CD14-positive monocyte (primary cell): ENCODE measurements at regions of chr1 and their contacts with region 1.

Region 1: GRCh38 chr1:109532365-109533136 is 7.1 kb upstream of the GPR61 start:
- DNase-seq: peak; percentile 69 to 80 (median 77)
- H3K4me3 ChIP-seq: peak overlapping the region in 2 of 3 experiments; percentile 13 to 59
- H3K4me3 Mint-ChIP-seq: peak overlapping the region; percentile 61 to 75
- H3K27ac ChIP-seq: no peak overlapping the region
- H3K27ac Mint-ChIP-seq: peak overlapping the region in 3 of 7 donors; percentile 2 to 79 (median 27)
- H3K4me1 ChIP-seq: peaks cover 10 to 11% of the 10 kb centered on the region in 2 donors
- H3K4me1 Mint-ChIP-seq: peaks cover 9% of the 10 kb centered on the region
- H3K27me3 ChIP-seq: no peaks in the 10 kb centered on the region
- H3K27me3 Mint-ChIP-seq: peaks cover 0 to 5% (median 2%) of the 10 kb centered on the region in 3 donors
- CTCF ChIP-seq: peak; percentile 94

Region 2: DNA sequence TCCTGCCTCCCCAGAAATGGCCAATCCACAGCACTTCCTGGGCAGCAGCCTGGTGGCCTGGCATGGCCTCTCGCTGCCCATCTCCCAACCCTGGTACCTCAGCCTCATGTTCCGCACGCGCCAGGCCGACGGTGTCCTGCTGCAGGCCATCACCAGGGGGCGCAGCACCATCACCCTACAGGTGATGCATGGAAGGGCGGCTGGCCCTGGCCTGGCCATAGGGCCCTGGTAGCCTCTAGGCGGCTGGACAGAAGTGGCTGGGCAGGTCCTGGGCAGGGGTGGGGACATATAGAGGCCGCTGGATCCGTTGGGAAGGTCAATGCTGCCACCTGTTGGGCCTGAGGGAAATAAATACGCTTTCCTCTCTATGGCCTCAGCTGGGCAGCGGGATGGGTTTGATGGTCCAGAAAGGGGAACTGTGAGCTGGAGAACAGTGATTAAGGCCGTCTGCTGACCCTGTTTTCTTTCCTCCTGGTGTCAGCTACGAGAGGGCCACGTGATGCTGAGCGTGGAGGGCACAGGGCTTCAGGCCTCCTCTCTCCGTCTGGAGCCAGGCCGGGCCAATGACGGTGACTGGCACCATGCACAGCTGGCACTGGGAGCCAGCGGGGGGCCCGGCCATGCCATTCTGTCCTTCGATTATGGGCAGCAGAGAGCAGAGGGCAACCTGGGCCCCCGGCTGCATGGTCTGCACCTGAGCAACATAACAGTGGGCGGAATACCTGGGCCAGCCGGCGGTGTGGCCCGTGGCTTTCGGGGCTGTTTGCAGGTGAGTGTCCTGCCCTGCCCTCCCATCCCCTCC is 268.8 kb before region 1 on chr1:
- intact Hi-C with region 1: loop called in 1 of 2 experiments (anchors 2 kb)
- DNase-seq: peak; percentile 78 to 85 (median 79)
- H3K4me3 ChIP-seq: no peak overlapping the region
- H3K4me3 Mint-ChIP-seq: no peak overlapping the region
- H3K27ac ChIP-seq: no peak overlapping the region
- H3K27ac Mint-ChIP-seq: peak overlapping the region in 1 of 7 donors; percentile 32
- H3K4me1 ChIP-seq: peaks cover 5 to 7% of the 10 kb centered on the region in 2 donors
- H3K4me1 Mint-ChIP-seq: peaks cover 6% of the 10 kb centered on the region
- H3K27me3 ChIP-seq: no peaks in the 10 kb centered on the region
- H3K27me3 Mint-ChIP-seq: peaks cover 0 to 9% (median 8%) of the 10 kb centered on the region in 3 donors
- CTCF ChIP-seq: peak; percentile 97

Region 3: GRCh38 chr1:109277434-109278204 is 254.9 kb before region 1 on chr1:
- intact Hi-C with region 1: loop called in 1 of 2 experiments (anchors 10 kb)
- DNase-seq: peak; percentile 42 to 62 (median 58)
- H3K4me3 ChIP-seq: no peak overlapping the region
- H3K4me3 Mint-ChIP-seq: no peak overlapping the region
- H3K27ac ChIP-seq: no peak overlapping the region
- H3K27ac Mint-ChIP-seq: peak overlapping the region in 1 of 7 donors; percentile 48
- H3K4me1 ChIP-seq: peaks cover 39 to 52% of the 10 kb centered on the region in 2 donors
- H3K4me1 Mint-ChIP-seq: peaks cover 61% of the 10 kb centered on the region
- H3K27me3 ChIP-seq: no peaks in the 10 kb centered on the region
- H3K27me3 Mint-ChIP-seq: peaks cover 4 to 10% (median 8%) of the 10 kb centered on the region in 3 donors
- CTCF ChIP-seq: peak; percentile 98

Region 4: DNA sequence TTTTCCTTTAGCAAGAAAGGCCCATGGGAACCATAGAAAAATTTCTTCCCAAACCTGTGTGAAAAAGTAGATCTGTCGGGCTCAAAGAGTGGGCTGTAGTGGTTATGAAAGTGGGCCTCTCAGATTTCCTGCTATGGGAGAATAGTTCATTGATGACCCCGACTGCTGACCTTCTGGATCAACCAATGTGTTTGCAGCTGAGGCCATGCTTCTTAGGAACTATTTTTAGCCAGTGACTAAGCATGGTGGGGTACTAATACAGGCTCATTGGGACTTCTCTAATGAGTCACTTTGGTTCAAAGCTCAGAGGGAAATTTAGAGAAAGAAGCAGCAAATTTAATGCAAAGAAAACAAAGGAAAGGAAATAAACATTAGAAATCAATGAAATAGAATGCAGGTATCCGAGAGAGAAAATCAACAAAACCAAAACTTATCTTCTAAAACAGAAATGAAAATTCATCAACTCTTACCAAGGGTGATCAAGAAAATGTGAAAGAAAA is 93.7 kb before region 1 on chr1:
- intact Hi-C with region 1: loop called in 1 of 2 experiments (anchors 10 kb)
- DNase-seq: peak in 2 of 3 donors; percentile 8 to 51
- H3K4me3 ChIP-seq: no peak overlapping the region
- H3K4me3 Mint-ChIP-seq: no peak overlapping the region
- H3K27ac ChIP-seq: no peak overlapping the region
- H3K27ac Mint-ChIP-seq: no peak overlapping the region
- H3K4me1 ChIP-seq: no peaks in the 10 kb centered on the region
- H3K4me1 Mint-ChIP-seq: no peaks in the 10 kb centered on the region
- H3K27me3 ChIP-seq: peaks cover 16 to 23% of the 10 kb centered on the region in 2 donors
- H3K27me3 Mint-ChIP-seq: peaks cover 2 to 9% (median 5%) of the 10 kb centered on the region in 3 donors
- CTCF ChIP-seq: no peak

Region 5: DNA sequence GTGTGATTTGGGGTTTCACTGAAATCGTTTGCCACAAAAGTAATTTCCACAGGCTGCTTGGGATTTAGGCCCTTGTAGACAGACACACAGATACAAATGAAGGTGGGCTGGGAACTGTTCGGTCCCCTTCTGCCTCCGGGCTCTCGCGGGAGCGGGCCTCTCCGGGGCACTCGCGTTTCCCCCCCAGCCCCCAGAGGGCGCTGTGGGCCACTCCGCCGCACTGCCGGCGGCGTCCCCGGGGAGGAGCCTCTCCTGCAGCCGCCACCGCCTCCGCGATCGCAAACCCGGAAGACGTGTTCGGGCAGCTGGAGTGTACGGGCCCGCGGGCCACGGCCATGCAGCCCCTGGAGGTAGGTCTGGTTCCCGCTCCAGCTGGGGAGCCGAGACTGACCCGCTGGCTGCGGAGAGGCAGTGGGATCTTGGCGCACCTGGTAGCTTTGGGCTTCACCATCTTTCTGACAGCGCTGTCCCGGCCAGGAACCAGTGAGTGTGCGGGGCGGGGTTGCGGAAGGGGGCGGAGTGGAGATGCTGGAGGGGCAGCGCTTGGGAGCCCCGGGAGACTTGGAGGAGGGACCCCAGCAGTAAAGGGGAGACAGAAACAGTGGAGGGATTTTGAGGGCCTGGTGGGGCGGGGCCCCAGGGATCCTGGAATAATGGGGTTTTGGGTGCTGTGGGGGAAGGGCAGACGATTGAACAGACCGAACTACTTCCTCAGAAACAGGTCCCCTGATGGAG is 38.6 kb before region 1 on chr1 and contains the start of gene CYB561D1:
- intact Hi-C with region 1: loop called (anchors 2 kb)
- DNase-seq: peak; percentile 80 to 84 (median 80)
- H3K4me3 ChIP-seq: peak within 1 kb of the TSS; percentile 89 to 100 (median 97)
- H3K4me3 Mint-ChIP-seq: peak within 1 kb of the TSS; percentile 94 to 96
- H3K27ac ChIP-seq: peak within 1 kb of the TSS in 1 of 2 donors; percentile 78
- H3K27ac Mint-ChIP-seq: peak within 1 kb of the TSS; percentile 79 to 93 (median 89)
- H3K4me1 ChIP-seq: peaks cover 12 to 19% of the 10 kb centered on the region in 2 donors
- H3K4me1 Mint-ChIP-seq: peaks cover 23% of the 10 kb centered on the region
- H3K27me3 ChIP-seq: no peaks in the 10 kb centered on the region
- H3K27me3 Mint-ChIP-seq: peaks cover 0 to 4% (median 0%) of the 10 kb centered on the region in 3 donors
- CTCF ChIP-seq: peak; percentile 88
- polyA plus RNA-seq, gene CYB561D1: 1.4 to 13.2 (median 4.2) TPM